AG04449 (cell line): ENCODE measurements at regions of chr11 and their contacts with region 1.

Region 1: DNA sequence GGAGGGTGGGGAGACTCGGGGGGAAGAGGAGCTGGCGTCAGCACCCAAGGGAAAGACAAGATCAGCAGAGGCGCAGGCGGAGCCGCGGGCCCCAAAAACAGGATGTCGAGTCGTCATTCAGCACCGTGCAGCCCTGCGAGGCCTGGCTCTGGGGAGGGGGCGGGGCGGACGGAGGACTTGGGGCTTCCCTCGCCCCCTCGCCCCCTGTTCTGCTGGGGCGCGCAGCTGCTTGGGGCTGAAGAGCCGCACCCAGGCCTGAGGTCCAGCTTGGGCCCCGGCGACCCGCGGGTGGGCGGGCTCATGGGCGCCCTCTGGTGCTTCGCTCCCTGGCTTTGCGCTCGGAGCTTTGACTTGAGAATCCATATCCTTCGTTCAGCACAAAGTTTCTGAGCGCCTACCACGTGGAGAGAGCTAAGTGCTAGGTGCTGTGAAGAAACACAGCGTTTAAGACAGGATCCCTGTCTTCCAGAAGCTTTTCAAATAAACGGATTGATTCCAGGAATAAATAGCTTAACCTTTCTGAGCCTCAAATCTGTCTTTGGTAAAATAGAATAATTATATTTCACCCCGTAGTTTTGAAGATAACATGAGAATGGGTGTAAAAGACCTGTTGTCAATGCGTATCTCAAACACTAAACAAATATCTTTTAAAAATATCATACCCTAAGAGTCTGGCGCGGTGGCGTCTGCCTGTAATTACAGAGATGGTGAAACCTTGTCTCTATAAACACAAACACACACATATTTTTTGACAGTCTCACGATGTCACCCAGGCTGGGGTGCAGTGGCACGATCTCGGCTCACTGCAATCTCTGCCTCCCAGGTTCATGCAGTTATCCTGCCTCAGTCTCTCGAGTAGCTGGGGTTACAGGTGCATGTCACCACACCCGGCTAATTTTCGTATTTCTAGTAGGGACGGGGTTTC is 929 bp upstream of the RHOG start:
- DNase-seq: no peak
- H3K4me3 ChIP-seq: peak overlapping the region; percentile 73
- CTCF ChIP-seq: peak; percentile 91

Region 2: DNA sequence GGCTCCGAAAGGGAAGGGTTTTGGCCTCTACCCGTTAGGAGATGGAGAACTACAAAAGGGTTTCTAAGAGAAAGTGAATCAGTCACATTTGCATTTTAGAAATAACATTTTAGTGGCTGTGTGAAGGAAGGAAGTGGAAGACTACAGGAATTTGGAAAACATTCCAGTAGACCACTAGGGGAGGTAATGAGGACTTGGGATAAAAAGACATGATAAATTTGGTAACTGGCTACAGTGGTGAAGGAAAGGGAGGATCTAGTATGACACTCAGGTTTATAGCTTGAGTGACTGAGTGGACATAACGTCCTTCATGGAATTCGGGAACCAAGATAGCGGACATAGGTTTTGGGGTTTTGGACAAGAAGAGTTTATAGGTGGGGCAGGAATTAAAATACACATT is 245.9 kb after region 1 on chr11:
- CTCF ChIA-PET with region 1: interaction called, 10 read pairs
- POLR2A ChIA-PET with region 1: no interaction called
- DNase-seq: no peak
- H3K4me3 ChIP-seq: no peak overlapping the region
- CTCF ChIP-seq: peak; percentile 21